ENCODE measurements at regions of chr19 and their contacts with region 1.

Region 1: DNA sequence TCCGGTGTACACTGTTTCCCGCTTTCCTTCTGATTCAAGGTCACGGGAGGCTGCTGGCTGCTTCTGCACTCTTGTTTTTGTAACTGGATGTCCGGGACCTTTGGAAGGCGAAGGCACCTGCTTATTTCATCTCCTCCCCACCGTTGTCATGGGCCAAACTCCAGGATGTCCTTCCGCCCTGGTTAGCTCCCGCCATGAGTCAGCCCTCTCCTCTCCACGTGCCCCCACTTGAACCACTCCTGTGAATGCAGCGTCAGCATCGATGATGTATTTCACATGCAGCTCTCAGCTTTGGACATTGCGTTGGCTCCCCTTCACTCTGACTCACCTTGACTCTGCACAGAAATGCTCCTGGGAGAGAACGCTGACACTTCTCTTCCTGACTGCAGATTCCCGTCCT is 5.5 kb upstream of the GALP start:
- DNase-seq: peak; percentile 86
- ATAC-seq: peak; percentile 87
- H3K4me3 ChIP-seq: peak overlapping the region in 2 of 3 experiments; percentile 8 to 35; a peak in 4 of 6 replicates
- H3K27ac ChIP-seq: peak overlapping the region; percentile 33
- H3K4me1 ChIP-seq: peaks cover 50% of the 10 kb centered on the region
- H3K27me3 ChIP-seq: peaks cover 0 to 6% of the 10 kb centered on the region in 2 experiments; a peak in 2 of 5 replicates
- CTCF ChIP-seq: 0 out of 2 replicates have a peak, but pooled peaks have one; percentile 3
- EP300 ChIP-seq: 0 out of 4 replicates have a peak, but pooled peaks of 1 of the 2 experiments have one; percentile 22
- POLR2A ChIP-seq: peak; percentile 34 to 36; a peak in 1 of 4 replicates
- RAD21 ChIP-seq: no peak

Region 2: DNA sequence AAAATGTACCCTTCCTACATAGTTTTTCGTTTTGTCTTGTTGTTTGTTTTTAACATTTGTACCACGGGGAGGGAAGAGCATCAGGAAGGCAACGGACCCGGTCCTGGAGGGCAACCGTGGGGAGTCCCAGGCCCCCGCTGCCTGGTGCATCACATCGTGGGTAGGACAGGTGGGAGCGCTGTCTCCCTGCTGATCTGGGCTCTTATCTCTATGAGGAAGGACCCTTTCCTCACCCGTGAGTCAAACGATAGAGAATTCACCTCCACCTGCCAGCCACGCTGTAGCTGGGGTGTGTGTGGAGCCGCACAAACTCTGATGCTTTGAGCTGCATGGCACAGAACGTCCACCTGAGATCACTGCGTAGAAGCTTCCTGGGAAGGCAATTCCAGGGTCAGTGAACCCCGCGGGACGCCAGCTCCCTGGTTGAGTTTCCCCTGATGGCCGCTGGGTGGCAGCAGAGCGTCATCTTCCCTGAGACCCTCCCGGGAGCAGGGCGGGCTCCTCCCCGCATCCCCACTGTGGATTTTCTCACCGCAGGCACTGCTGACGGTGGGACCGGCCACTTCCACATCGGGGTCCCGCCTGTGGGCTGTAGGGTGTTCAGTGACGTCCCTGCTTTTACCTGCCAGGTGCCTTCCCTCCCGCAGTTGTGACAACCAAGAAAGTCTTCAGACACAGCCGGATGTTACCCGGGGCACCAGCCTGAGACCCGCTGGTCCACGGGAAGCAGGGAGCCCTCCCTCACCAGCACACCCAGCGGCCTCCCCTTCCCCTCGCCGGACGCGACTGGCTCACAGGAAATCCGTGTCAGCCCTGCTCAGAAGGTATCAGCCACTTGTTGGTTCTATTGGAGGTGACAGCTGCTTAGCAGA is 103.9 kb before region 1 on chr19:
- CTCF ChIA-PET with region 1: no interaction called
- POLR2A ChIA-PET with region 1: no interaction called
- in situ Hi-C with region 1: no loop called
- intact Hi-C with region 1: no loop called
- DNase-seq: peak; percentile 39
- ATAC-seq: peak; percentile 93
- H3K4me3 ChIP-seq: peak overlapping the region in 1 of 3 experiments; percentile 15; a peak in 1 of 6 replicates
- H3K27ac ChIP-seq: no peak overlapping the region
- H3K4me1 ChIP-seq: peaks cover 4% of the 10 kb centered on the region; the same call in 1 of the 2 replicates
- H3K27me3 ChIP-seq: peaks cover 0 to 19% of the 10 kb centered on the region in 2 experiments; a peak in 3 of 5 replicates
- CTCF ChIP-seq: peak; percentile 95
- EP300 ChIP-seq: no peak
- POLR2A ChIP-seq: no peak
- RAD21 ChIP-seq: peak; percentile 77

Region 3: DNA sequence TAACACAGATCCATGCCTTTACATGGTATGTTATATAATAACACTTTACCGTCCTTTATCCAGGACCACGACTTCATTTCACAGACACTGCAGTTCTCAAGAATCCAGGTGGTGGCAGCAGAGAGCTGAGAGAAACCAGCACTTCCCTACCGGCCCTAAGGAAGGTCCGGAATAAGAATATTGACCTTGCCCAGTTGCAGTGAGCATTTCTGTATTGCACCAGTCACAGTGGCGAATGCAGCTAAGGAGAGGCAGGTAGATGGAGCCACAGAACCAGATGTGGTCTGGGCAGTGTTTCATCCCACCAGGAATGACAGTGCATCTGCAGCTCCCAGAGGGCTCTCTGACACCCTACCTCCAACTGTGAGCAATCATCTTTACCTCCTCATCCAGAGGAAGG is 93.8 kb before region 1 on chr19:
- CTCF ChIA-PET with region 1: interaction called, 11 read pairs
- POLR2A ChIA-PET with region 1: no interaction called
- in situ Hi-C with region 1: no loop called
- intact Hi-C with region 1: loop called (anchors 2 kb)
- DNase-seq: peak; percentile 48
- ATAC-seq: peak; percentile 49
- H3K4me3 ChIP-seq: no peak overlapping the region
- H3K27ac ChIP-seq: no peak overlapping the region
- H3K4me1 ChIP-seq: peaks cover 20% of the 10 kb centered on the region
- H3K27me3 ChIP-seq: no peaks in the 10 kb centered on the region; a peak in 1 of 5 replicates
- CTCF ChIP-seq: peak; percentile 87
- EP300 ChIP-seq: no peak
- POLR2A ChIP-seq: no peak
- RAD21 ChIP-seq: peak; percentile 63

Region 4: GRCh38 chr19:56105090-56105701 is 65.1 kb before region 1 on chr19:
- CTCF ChIA-PET with region 1: interaction called, 23 read pairs
- POLR2A ChIA-PET with region 1: interaction called, 9 read pairs
- in situ Hi-C with region 1: no loop called
- intact Hi-C with region 1: loop called (anchors 1 kb)
- DNase-seq: peak; percentile 78
- ATAC-seq: peak; percentile 84
- H3K4me3 ChIP-seq: peak overlapping the region in 1 of 3 experiments; percentile 25; a peak in 2 of 6 replicates
- H3K27ac ChIP-seq: peak overlapping the region; percentile 53
- H3K4me1 ChIP-seq: peaks cover 44% of the 10 kb centered on the region
- H3K27me3 ChIP-seq: no peaks in the 10 kb centered on the region
- CTCF ChIP-seq: peak; percentile 82
- EP300 ChIP-seq: no peak
- POLR2A ChIP-seq: no peak
- RAD21 ChIP-seq: peak; percentile 89

Region 5: GRCh38 chr19:56111601-56112312 is 58.5 kb before region 1 on chr19:
- CTCF ChIA-PET with region 1: no interaction called
- POLR2A ChIA-PET with region 1: interaction called, 9 read pairs
- in situ Hi-C with region 1: no loop called
- intact Hi-C with region 1: loop called (anchors 2 kb)
- DNase-seq: peak; percentile 45
- ATAC-seq: peak; percentile 72
- H3K4me3 ChIP-seq: peak overlapping the region in 2 of 3 experiments; percentile 41 to 57; a peak in 3 of 6 replicates
- H3K27ac ChIP-seq: peak overlapping the region; percentile 83
- H3K4me1 ChIP-seq: peaks cover 83% of the 10 kb centered on the region
- H3K27me3 ChIP-seq: no peaks in the 10 kb centered on the region
- CTCF ChIP-seq: no peak
- EP300 ChIP-seq: no peak
- POLR2A ChIP-seq: no peak
- RAD21 ChIP-seq: no peak

Region 6: DNA sequence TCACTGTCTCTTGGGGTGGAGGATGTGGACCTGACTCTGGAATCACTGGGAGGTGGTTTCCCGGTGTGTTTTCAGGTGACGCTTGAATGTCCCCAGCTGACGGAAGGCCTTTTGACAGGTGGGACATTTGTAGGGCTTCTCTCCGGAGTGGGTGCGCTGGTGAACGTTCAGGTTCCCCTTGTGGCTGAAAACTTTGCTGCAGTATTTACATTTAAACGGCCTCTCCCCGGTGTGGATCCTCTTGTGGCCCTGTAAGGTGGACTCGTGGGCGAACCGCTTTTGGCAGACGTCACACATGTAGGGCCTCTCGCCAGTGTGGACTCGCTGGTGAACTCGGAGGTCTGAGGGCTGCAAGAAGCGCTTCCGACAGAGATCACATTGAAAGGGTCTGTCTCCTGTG is 19.5 kb after region 1 on chr19:
- CTCF ChIA-PET with region 1: no interaction called
- POLR2A ChIA-PET with region 1: no interaction called
- in situ Hi-C with region 1: no loop called
- intact Hi-C with region 1: no loop called
- DNase-seq: no peak
- ATAC-seq: peak; percentile 76
- H3K4me3 ChIP-seq: no peak overlapping the region
- H3K27ac ChIP-seq: no peak overlapping the region
- H3K4me1 ChIP-seq: no peaks in the 10 kb centered on the region
- H3K27me3 ChIP-seq: peaks cover 0 to 2% of the 10 kb centered on the region in 2 experiments; a peak in 2 of 5 replicates
- CTCF ChIP-seq: 0 out of 2 replicates have a peak, but pooled peaks have one; percentile 6
- EP300 ChIP-seq: no peak
- POLR2A ChIP-seq: no peak
- RAD21 ChIP-seq: no peak

Region 7: GRCh38 chr19:56201973-56202372 is 31.7 kb after region 1 on chr19 and contains the start of gene ZSCAN5C:
- CTCF ChIA-PET with region 1: no interaction called
- POLR2A ChIA-PET with region 1: no interaction called
- in situ Hi-C with region 1: no loop called
- intact Hi-C with region 1: no loop called
- DNase-seq: no peak
- ATAC-seq: no peak
- H3K4me3 ChIP-seq: no peak within 1 kb of the TSS
- H3K27ac ChIP-seq: no peak within 1 kb of the TSS
- H3K4me1 ChIP-seq: no peaks in the 10 kb centered on the region
- H3K27me3 ChIP-seq: peaks cover 0 to under 1% of the 10 kb centered on the region in 2 experiments; a peak in 1 of 5 replicates
- CTCF ChIP-seq: no peak
- EP300 ChIP-seq: no peak
- POLR2A ChIP-seq: no peak
- RAD21 ChIP-seq: no peak
- total RNA-seq, gene ZSCAN5C: not detected in 2 replicates

Region 8: GRCh38 chr19:56217039-56217949 is 47.0 kb after region 1 on chr19:
- CTCF ChIA-PET with region 1: no interaction called
- POLR2A ChIA-PET with region 1: no interaction called
- in situ Hi-C with region 1: no loop called
- intact Hi-C with region 1: no loop called
- DNase-seq: no peak
- ATAC-seq: no peak
- H3K4me3 ChIP-seq: no peak overlapping the region
- H3K27ac ChIP-seq: no peak overlapping the region
- H3K4me1 ChIP-seq: no peaks in the 10 kb centered on the region
- H3K27me3 ChIP-seq: peaks cover 0 to 10% of the 10 kb centered on the region in 2 experiments; a peak in 1 of 5 replicates
- CTCF ChIP-seq: no peak
- EP300 ChIP-seq: no peak
- POLR2A ChIP-seq: no peak
- RAD21 ChIP-seq: no peak